ENCODE measurements at regions of chr20 and their contacts with region 1.

Region 1: DNA sequence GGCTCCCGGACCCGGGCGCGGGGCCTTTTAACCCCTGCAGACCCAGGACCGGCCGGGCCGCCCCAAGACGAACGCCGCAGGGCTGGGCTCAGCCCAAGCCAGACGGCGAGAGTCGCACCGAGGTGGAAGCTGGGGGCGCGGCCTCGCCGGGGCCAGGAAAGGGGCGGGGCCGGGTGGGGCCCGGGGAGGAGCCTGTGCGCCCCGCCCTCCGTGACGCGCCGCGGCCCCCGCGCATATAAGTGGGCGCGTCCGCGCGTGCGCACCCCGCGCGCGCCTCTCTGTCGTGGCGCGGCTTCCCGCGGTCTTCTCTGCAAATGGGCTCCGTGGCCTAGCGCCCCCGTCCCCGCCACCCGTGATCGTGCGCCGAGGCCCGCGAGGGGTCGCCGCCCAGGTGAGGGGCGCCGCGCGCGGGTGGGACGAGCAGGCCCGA is at the start of gene PPDPF:
- DNase-seq: peak; percentile 93
- ATAC-seq: peak; percentile 80
- H3K4me3 Mint-ChIP-seq: peak within 1 kb of the TSS; percentile 77
- H3K27ac Mint-ChIP-seq: peak within 1 kb of the TSS; percentile 78
- H3K4me1 Mint-ChIP-seq: peaks cover 10% of the 10 kb centered on the region
- H3K27me3 Mint-ChIP-seq: no peaks in the 10 kb centered on the region
- total RNA-seq, gene PPDPF: 119 to 133 TPM

Region 2: DNA sequence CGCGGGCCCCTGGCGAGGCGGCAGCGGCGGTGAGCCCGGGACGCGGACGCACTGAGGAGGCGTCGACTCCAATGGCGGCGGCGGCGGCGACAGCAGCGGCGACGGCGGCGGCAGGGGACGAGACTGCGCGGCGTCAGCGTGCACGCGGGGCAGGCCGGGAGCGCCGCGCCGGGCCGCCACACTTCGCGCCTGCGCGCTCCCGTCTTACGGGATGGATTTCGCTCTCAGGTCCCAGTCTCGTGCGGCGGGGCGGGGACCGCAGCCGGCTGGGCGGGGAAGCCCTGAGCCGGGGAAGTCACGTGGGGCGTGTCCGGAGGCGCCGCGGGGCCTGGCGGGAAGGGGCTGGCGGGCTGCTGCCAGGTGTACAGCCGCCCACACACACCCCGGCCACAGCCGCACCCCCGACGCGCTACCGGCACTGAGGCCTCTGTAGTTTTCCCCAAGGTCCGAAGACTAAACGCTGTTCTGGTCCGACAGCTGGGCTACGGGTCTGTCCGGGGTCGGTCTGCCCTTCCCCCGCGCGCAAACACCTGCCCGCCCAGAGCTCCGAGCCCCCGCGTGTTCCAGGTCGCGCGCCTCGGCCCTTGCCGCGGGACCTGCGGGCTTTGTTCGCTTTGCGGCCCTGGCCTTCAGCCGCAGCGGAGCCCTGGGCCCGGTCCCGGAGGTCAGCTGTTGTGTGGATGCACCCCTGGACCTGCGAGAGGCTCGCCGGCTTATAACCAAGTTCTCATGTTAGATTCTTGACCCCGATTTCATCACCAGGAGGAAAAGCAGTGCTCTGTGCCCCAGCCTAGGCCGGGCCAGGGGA is 304.3 kb before region 1 on chr20 and contains the start of gene YTHDF1:
- CTCF ChIA-PET with region 1: no interaction called
- POLR2A ChIA-PET with region 1: no interaction called
- intact Hi-C with region 1: loop called in 1 of 2 experiments (anchors 2 kb)
- DNase-seq: peak; percentile 98
- ATAC-seq: peak; percentile 98
- H3K4me3 Mint-ChIP-seq: peak within 1 kb of the TSS; percentile 92
- H3K27ac Mint-ChIP-seq: peak within 1 kb of the TSS; percentile 88
- H3K4me1 Mint-ChIP-seq: peaks cover 43% of the 10 kb centered on the region
- H3K27me3 Mint-ChIP-seq: peaks cover 4% of the 10 kb centered on the region
- total RNA-seq, gene YTHDF1: 32.2 to 32.6 TPM

Region 3: DNA sequence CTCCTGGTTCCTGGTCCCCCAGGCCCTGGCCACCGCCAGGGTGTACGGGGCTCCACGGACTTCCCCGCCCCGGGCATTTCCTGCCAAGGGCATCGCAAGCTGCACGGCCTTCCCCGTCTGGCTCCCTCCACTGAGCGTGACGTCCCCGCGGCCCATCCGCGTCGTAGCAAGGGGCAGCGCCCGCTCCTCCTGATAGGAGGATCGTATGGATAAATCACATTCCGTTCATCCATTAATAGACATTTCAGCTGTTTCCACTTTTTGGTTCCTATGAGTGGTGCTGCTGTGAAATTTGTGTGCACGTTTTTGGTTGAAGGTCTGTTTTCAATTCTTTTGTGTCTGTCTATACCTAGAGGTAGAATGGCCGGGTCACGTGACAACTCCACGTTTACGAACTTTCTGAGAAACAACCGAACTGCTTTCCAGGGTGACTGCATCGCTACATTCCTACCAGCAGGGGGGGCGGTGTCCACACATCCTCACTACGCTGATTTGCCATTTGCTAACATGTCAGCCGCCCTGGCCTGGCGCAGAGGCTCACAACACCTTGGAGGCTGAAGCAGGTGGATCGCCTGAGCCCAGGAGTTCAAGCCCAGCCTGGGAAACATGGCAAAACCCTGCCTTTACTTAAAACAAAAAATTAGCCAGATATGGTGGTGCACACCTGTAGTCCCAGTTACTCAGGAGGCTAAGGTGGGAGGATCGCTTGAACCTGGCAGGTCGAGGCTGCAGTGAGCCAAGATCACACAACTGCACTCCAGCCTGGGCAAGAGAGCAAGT is 85.7 kb before region 1 on chr20:
- CTCF ChIA-PET with region 1: no interaction called
- POLR2A ChIA-PET with region 1: interaction called, 4 read pairs
- intact Hi-C with region 1: loop called (anchors 1 to 5 kb)
- DNase-seq: peak; percentile 90
- ATAC-seq: peak; percentile 80
- H3K4me3 Mint-ChIP-seq: peak overlapping the region; percentile 19
- H3K27ac Mint-ChIP-seq: peak overlapping the region; percentile 58
- H3K4me1 Mint-ChIP-seq: peaks cover 6% of the 10 kb centered on the region
- H3K27me3 Mint-ChIP-seq: peaks cover 8% of the 10 kb centered on the region

Region 4: GRCh38 chr20:63530789-63531160 is 10.3 kb after region 1 on chr20:
- CTCF ChIA-PET with region 1: no interaction called
- POLR2A ChIA-PET with region 1: no interaction called
- intact Hi-C with region 1: no loop called
- DNase-seq: peak; percentile 3
- ATAC-seq: no peak
- H3K4me3 Mint-ChIP-seq: no peak overlapping the region
- H3K27ac Mint-ChIP-seq: no peak overlapping the region
- H3K4me1 Mint-ChIP-seq: peaks cover 7% of the 10 kb centered on the region
- H3K27me3 Mint-ChIP-seq: no peaks in the 10 kb centered on the region

Region 5: GRCh38 chr20:63553227-63553932 is 32.9 kb after region 1 on chr20:
- CTCF ChIA-PET with region 1: interaction called, 3 read pairs
- POLR2A ChIA-PET with region 1: interaction called, 6 read pairs
- intact Hi-C with region 1: loop called in 1 of 2 experiments (anchors 1 kb)
- DNase-seq: peak; percentile 95
- ATAC-seq: peak; percentile 88
- H3K4me3 Mint-ChIP-seq: no peak overlapping the region
- H3K27ac Mint-ChIP-seq: peak overlapping the region; percentile 45
- H3K4me1 Mint-ChIP-seq: peaks cover 11% of the 10 kb centered on the region
- H3K27me3 Mint-ChIP-seq: no peaks in the 10 kb centered on the region

Region 6: DNA sequence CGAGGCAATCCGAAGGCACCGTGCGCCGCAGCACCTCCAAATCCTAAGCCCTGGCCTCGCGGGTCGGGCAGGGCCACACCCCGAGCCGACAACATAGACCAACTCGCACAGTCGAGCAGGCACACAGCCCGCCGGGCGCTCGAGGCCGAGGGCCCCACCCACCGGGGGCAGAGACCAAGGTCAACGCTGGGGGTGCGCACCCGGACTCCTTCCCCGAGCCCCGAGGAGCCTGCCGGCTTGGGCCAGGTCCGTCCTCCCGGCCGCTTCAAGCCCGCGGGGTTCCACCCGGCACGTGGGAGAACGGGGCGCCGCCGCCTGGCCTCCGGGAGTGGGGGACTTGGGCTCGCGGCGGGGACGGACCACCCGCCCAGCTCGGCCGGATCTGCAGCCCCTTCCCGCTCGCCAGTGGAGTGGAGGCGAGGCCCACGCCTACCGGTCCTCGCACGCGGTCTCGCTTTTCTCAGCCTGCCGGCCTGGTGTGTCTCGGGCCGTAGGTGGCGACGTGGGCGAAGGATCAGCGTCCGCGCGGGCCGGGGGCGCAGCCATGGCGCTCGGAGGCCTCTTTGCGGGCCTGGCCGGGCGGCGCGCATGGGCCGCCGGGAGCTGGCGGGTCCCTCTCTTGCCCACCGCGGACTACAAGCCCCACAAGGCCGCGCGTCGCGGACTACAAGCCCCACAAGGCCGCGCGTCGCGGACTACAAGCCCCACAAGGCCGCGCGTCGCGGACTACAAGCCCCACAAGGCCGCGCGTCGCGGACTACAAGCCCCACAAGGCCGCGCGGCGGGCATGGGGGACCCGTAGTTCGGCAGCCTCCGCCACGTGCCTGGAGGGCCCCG is 435.5 kb after region 1 on chr20 and contains the start of gene UCKL1:
- CTCF ChIA-PET with region 1: no interaction called
- POLR2A ChIA-PET with region 1: interaction called, 3 read pairs
- intact Hi-C with region 1: loop called in 1 of 2 experiments (anchors 1 kb)
- DNase-seq: peak; percentile 95
- ATAC-seq: peak; percentile 78
- H3K4me3 Mint-ChIP-seq: peak within 1 kb of the TSS; percentile 77
- H3K27ac Mint-ChIP-seq: peak within 1 kb of the TSS; percentile 89
- H3K4me1 Mint-ChIP-seq: peaks cover 37% of the 10 kb centered on the region
- H3K27me3 Mint-ChIP-seq: no peaks in the 10 kb centered on the region
- total RNA-seq, gene UCKL1: 28.3 to 32.2 TPM

Region 7: DNA sequence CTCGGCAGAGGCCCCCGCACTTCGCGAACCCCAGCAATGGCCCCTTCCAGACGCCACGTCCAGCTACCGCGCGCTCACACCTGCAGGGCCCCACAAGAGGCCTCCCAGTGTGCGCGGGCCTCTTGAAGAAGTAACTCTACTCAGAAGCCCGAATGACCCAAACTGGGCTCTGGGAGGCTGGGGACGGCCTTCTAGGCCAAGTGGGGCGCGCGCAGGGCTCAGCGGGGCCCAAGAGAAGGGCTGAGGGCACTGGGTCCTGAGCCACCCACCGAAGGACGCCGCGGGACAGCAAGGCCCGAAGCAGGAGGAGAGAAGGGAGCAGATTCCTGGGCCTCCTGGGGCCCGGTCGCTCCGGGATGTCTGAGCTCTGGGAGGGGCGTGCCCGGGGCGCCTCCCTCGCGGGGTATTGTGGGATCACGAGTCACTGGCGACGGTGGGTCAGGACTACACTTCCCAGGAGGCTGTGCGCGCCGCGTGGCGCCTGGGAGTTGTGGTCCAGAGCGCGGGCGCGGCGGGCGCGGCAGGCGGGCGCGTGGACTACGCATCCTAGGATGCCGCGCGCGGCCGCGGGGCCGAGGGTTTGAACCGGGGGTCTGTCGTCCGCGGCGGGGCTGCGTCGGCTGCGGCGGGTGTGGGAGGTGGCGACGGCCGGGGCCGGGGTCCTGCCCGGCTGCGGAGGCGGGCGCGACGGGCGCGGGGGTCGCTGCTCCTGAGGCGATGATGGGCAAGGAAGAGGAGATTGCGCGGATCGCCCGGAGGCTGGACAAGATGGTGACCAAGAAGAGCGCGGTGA is 542.3 kb after region 1 on chr20 and contains the start of gene TCEA2:
- CTCF ChIA-PET with region 1: no interaction called
- POLR2A ChIA-PET with region 1: no interaction called
- intact Hi-C with region 1: loop called in 1 of 2 experiments (anchors 1 kb)
- DNase-seq: peak; percentile 98
- ATAC-seq: peak; percentile 83
- H3K4me3 Mint-ChIP-seq: peak within 1 kb of the TSS; percentile 82
- H3K27ac Mint-ChIP-seq: peak within 1 kb of the TSS; percentile 79
- H3K4me1 Mint-ChIP-seq: peaks cover 51% of the 10 kb centered on the region
- H3K27me3 Mint-ChIP-seq: no peaks in the 10 kb centered on the region
- total RNA-seq, gene TCEA2: 40.6 to 50.0 TPM

Region 8: GRCh38 chr20:64255361-64256281 is 735.1 kb after region 1 on chr20 and contains the start of gene PCMTD2:
- CTCF ChIA-PET with region 1: no interaction called
- POLR2A ChIA-PET with region 1: no interaction called
- intact Hi-C with region 1: loop called in 1 of 2 experiments (anchors 2 kb)
- DNase-seq: peak; percentile 91
- ATAC-seq: peak; percentile 91
- H3K4me3 Mint-ChIP-seq: peak within 1 kb of the TSS; percentile 85
- H3K27ac Mint-ChIP-seq: peak within 1 kb of the TSS; percentile 92
- H3K4me1 Mint-ChIP-seq: peaks cover 46% of the 10 kb centered on the region
- H3K27me3 Mint-ChIP-seq: peaks cover 6% of the 10 kb centered on the region
- total RNA-seq, gene PCMTD2: 32.7 to 37.8 TPM

Measured in activated CD4-positive, alpha-beta T cell treated with anti-CD3 and anti-CD28 coated beads for 36 hours (primary cell).